GM10248 (cell line): ENCODE measurements at regions of chr15 and their contacts with region 1.

Region 1: DNA sequence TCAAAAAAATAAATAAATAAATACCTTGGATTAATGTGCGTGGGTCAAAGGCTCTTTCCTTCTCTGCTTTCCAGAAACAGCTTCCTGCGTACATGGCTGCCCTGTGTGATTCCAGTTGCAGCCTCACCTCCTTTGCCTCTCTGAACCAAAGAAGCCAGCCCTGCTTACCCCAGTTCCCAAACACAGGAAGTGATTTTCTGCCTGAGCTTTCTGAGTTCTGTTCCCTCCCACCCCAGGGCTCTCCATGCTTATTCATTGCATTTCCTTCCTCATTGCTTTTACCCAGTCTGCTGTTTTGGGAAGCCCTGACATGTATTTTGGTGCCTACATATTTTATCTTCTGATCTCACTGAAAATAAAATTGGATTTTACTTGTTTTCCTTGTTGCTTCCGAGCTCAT is 15.4 kb downstream of the ZSCAN2 start:
- DNase-seq: no peak
- CTCF ChIP-seq: no peak

Region 2: DNA sequence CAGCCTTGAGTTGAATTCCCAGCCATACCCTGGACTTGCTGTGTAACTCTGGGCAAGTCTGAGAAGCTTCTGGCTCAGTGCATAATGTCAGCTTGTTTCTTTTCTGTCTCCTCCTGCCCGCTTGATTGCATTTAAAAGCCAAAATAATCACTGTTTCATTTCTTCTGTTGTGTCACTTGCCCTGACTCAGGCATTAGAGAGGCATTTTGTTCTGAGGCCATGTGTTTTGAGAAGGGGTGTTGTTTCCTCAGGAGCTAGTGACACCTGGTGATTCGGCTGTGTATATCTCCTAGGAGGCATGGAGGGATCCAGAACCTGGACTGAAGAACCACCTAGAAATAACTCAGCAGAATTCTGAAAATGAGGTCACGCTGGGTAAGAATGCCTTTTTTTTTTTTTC is 21.9 kb after region 1 on chr15:
- CTCF ChIA-PET with region 1: no interaction called
- POLR2A ChIA-PET with region 1: interaction called, 11 read pairs
- DNase-seq: no peak
- CTCF ChIP-seq: no peak

Region 3: DNA sequence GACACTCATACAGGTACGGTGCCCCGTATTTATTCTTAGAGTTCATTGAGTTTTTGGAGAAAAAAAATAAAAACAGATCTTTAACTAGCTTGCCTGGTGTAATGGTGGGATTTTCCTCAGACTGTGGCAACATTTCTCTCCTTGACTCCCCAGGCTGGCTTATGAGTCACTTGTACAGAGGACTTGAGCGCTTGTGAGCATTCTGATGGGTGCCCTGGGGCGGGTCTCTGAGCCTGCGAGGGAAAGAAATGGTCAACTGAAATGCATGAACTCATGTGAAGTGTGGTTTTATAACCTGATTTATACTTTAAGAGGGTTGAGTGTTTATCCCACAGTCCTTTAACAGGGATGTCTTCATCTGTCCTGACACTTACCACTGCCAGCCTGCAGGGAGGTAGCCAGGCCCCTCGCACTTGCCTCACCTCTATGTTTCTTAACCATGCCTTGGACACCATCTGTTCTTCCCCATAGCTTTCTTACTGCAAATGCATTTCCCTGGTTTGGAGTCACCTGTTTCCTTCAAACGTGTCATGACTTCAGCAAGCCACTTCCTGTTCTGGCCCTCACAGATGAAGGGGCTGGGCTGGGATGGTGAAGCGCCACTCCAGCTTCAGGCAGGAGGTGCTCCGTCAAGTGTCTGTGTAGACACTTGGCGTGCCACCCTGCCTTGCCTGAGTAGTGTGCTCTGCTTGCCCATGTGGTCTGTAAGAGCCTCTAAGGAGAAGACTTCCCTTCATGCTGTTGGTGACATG is 484.1 kb after region 1 on chr15:
- CTCF ChIA-PET with region 1: no interaction called
- POLR2A ChIA-PET with region 1: interaction called, 10 read pairs
- DNase-seq: no peak
- CTCF ChIP-seq: no peak